ENCODE measurements at regions of chr4 and their contacts with region 1.

Region 1: DNA sequence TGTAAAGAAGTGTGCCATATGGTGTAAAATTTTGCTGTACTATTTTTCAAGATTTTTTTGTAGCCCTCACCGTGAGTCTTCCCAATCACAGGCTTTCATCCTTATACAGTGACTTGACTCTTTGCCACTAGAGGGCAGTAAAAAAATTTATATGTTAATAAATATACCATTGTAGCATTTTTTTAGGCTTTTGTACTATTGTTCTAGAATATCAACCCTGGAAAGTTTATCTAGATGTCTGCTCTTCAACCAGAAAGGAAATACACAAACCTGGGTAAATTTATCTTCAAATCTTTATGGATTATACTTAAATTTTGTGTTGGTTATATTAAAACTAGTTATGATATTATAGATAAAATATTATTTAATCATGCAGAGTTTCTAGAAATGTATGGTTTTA is 235.3 kb downstream of the TENM3 start:
- DNase-seq: peak; percentile 65
- H3K4me3 ChIP-seq: no peak overlapping the region
- H3K27ac ChIP-seq: no peak overlapping the region
- H3K4me1 ChIP-seq: no peaks in the 10 kb centered on the region
- CTCF ChIP-seq: peak; percentile 87

Region 2: GRCh38 chr4:181541396-181541795 is 937.1 kb before region 1 on chr4:
- CTCF ChIA-PET with region 1: no interaction called
- POLR2A ChIA-PET with region 1: no interaction called
- intact Hi-C with region 1: no loop called
- DNase-seq: no peak
- H3K4me3 ChIP-seq: no peak overlapping the region
- H3K27ac ChIP-seq: no peak overlapping the region
- H3K4me1 ChIP-seq: no peaks in the 10 kb centered on the region
- CTCF ChIP-seq: no peak

Region 3: GRCh38 chr4:182093431-182093831 is 385.0 kb before region 1 on chr4:
- CTCF ChIA-PET with region 1: no interaction called
- POLR2A ChIA-PET with region 1: no interaction called
- intact Hi-C with region 1: no loop called
- DNase-seq: no peak
- H3K4me3 ChIP-seq: no peak overlapping the region
- H3K27ac ChIP-seq: no peak overlapping the region
- H3K4me1 ChIP-seq: no peaks in the 10 kb centered on the region
- CTCF ChIP-seq: no peak

Region 4: GRCh38 chr4:182806259-182807252 is 328.1 kb after region 1 on chr4:
- CTCF ChIA-PET with region 1: no interaction called
- POLR2A ChIA-PET with region 1: interaction called, 3 read pairs
- intact Hi-C with region 1: loop called (anchors 5 kb)
- DNase-seq: peak; percentile 37
- H3K4me3 ChIP-seq: no peak overlapping the region
- H3K27ac ChIP-seq: no peak overlapping the region
- H3K4me1 ChIP-seq: no peaks in the 10 kb centered on the region
- CTCF ChIP-seq: peak; percentile 78